Activated CD8-positive, alpha-beta T cell treated with anti-CD3 and anti-CD28 coated beads, Interleukin-2, amount 10 ng/mL, durations not matched to agents 7 days and 5 days (primary cell): ENCODE measurements at regions of chr4 and their contacts with region 1.

Region 1: DNA sequence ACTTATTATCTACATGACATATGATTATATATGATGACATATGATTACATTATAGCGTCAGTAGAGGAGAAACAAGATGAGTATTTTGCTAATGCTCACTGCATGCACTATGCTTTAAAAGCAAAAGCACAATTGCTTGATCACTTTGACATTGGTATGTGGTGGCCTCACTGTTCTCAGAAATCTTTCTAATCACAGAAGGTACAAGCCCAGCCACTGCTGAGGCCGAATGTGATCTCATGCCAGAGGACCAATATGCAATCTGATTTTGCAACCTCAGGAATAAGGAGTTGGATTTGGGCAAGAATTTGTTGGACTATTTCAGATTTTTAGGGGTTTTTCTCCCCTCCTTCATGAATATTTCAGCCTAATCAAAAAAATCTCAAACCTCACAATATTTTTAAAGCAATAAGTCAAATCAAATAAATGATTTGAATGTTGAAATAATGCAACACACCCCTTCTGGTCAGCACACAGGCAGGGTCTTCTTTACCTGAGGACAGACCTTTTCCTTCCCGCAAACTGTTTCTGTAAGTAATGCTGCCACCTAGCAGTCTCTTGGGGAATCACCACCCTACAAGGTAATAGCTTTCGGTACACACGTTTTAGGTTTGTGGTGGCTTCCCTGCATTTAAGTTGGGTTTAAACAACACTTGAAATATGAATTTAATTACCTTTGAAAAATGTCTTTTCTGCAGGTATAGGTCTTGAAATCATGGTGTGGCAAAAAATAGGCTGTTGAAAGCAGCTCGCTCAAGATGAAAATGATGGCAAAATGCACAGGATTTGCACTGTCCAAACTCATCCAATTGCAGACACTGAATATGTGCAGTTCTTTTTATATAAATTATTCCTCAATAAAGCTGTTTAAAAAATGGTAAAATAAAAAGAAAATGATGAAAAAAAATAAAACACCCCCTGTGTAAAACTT is 4.8 kb upstream of the CXCL13 start:
- DNase-seq: peak; percentile 53
- ATAC-seq: peak; percentile 53
- H3K4me3 Mint-ChIP-seq: no peak overlapping the region
- H3K27ac Mint-ChIP-seq: no peak overlapping the region
- H3K4me1 Mint-ChIP-seq: peaks cover 1% of the 10 kb centered on the region
- H3K27me3 Mint-ChIP-seq: peaks cover 24% of the 10 kb centered on the region

Region 2: GRCh38 chr4:77385124-77385969 is 215.4 kb before region 1 on chr4:
- CTCF ChIA-PET with region 1: interaction called, 10 read pairs
- POLR2A ChIA-PET with region 1: no interaction called
- DNase-seq: peak; percentile 65
- ATAC-seq: peak; percentile 69
- H3K4me3 Mint-ChIP-seq: no peak overlapping the region
- H3K27ac Mint-ChIP-seq: no peak overlapping the region
- H3K4me1 Mint-ChIP-seq: peaks cover 8% of the 10 kb centered on the region
- H3K27me3 Mint-ChIP-seq: peaks cover 12% of the 10 kb centered on the region

Region 3: GRCh38 chr4:77465271-77465670 is 135.5 kb before region 1 on chr4:
- CTCF ChIA-PET with region 1: interaction called, 122 read pairs
- POLR2A ChIA-PET with region 1: interaction called, 4 read pairs
- DNase-seq: no peak
- ATAC-seq: no peak
- H3K4me3 Mint-ChIP-seq: no peak overlapping the region
- H3K27ac Mint-ChIP-seq: no peak overlapping the region
- H3K4me1 Mint-ChIP-seq: no peaks in the 10 kb centered on the region
- H3K27me3 Mint-ChIP-seq: peaks cover 11% of the 10 kb centered on the region

Region 4: GRCh38 chr4:77576351-77576750 is 24.4 kb before region 1 on chr4:
- CTCF ChIA-PET with region 1: interaction called, 13 read pairs
- POLR2A ChIA-PET with region 1: no interaction called
- DNase-seq: no peak
- ATAC-seq: no peak
- H3K4me3 Mint-ChIP-seq: no peak overlapping the region
- H3K27ac Mint-ChIP-seq: no peak overlapping the region
- H3K4me1 Mint-ChIP-seq: peaks cover 1% of the 10 kb centered on the region
- H3K27me3 Mint-ChIP-seq: peaks cover 4% of the 10 kb centered on the region

Region 5: DNA sequence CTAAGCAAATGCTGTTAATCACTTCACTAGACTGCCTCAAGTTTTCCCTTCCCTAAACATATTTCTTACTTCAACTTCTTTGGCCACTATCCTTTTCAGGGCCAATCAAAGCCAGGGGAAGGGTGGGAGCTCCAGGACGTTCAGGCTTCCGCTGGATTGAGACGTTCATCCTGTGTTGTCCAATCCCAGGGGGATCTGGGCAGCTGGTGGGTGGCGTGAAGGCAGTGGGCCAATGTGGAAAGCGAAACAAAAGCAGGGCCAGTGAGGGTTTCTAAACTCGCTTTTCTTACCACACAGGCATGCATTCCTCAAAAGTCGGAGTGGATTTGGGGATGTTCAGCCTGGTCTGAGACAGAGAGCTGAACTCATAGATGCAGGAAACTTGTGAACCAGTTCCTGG is 12.5 kb after region 1 on chr4:
- CTCF ChIA-PET with region 1: interaction called, 44 read pairs
- POLR2A ChIA-PET with region 1: no interaction called
- DNase-seq: no peak
- ATAC-seq: no peak
- H3K4me3 Mint-ChIP-seq: no peak overlapping the region
- H3K27ac Mint-ChIP-seq: no peak overlapping the region
- H3K4me1 Mint-ChIP-seq: peaks cover under 1% of the 10 kb centered on the region
- H3K27me3 Mint-ChIP-seq: peaks cover 15% of the 10 kb centered on the region